Tibial artery (tissue), 4 donors: ENCODE measurements at regions of chr15 and their contacts with region 1.

Region 1: GRCh38 chr15:70264014-70264582 is 166.4 kb upstream of the TLE3 start:
- DNase-seq: no peak
- H3K4me3 ChIP-seq: no peak overlapping the region
- H3K27ac ChIP-seq: no peak overlapping the region
- H3K4me1 ChIP-seq: peaks cover 0 to 33% (median 16%) of the 10 kb centered on the region in 4 donors
- H3K27me3 ChIP-seq: no peaks in the 10 kb centered on the region
- CTCF ChIP-seq: no peak

Region 2: GRCh38 chr15:70196314-70197291 is 67.5 kb before region 1 on chr15:
- intact Hi-C with region 1: loop called (anchors 5 kb)
- DNase-seq: peak; percentile 63 to 88
- H3K4me3 ChIP-seq: no peak overlapping the region
- H3K27ac ChIP-seq: peak overlapping the region; percentile 75 to 81
- H3K4me1 ChIP-seq: peaks cover 0 to 30% (median 24%) of the 10 kb centered on the region in 4 donors
- H3K27me3 ChIP-seq: no peaks in the 10 kb centered on the region
- CTCF ChIP-seq: no peak